Mucosa of descending colon (tissue), 3 donors: ENCODE measurements at regions of chr1 and their contacts with region 1.

Region 1: DNA sequence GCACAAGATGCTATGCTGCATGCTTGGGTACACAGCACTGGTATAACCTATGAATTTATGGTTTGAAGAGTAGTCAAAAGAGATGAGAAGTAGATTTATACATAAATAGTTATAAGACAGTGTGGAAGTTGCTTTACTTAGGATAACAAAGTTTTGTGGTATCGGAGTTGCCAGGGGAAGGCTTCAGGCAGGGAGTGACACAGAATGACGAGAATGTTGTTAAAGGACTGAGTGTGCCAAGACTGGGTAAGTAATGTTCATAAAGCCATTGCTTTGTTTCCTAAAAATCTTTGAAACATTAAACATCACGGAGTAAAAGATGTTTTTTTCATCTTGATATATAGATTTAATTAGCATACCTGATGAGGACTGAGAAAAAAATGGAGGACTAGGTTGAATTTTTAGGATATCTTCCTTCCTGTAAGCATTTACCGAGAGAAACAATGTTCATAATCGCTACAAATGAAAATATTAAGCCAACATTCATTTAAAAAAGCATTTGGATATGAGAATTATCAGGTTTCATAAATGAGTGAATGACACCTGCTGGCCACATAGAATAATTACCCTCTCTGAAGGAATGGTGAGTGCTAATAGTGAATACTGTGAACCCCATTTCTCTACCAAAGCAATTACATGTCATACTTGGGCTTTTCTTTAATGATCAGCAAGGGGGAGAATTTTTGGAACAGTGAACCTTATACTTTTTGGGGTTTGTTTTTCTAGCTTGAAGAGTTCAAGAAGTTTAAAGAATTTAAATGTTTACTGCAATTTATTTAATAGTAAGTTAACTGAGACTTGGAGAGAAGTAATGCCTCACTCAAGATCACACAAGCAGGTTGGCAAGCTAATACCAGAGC is 28.4 kb downstream of the EXTL2 start:
- DNase-seq: no peak
- ATAC-seq: no peak
- H3K4me3 ChIP-seq: no peak overlapping the region
- H3K4me1 ChIP-seq: no peaks in the 10 kb centered on the region
- CTCF ChIP-seq: no peak

Region 2: DNA sequence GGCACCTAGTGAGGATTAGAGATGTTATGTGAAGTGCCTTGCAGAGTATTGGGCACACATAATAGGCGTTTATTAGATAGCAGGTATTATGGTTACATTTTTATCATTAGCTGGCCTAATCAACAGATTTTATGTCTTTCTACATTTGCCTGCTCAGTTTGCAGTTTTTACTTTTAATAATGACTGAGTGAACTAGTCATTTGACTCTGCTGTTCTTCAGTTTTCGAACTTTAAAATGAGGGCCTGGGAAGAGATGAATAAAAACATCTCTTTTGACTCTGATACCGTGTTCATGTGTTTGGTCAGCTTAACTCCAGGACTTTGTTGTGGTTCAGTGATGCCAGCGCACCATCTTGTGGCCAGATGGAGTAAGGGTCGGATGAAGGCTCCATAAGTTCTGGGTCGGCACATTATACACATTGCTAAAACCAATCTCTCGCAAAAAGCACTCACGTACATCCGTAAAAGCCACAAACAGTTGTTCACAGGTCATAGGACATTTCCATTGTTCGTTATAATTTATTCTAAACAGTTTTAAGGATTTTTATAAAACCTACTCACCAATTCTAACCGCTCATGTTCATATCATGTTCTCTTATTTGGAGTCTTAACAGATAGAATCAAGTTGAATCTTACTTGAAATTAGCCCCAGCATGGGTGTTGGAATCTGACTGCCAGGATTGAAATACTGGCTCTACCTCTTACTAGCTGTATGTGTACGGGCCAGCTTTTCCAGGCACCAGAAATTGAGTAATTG is 406.7 kb before region 1 on chr1:
- intact Hi-C with region 1: loop called in 1 of 2 experiments (anchors 5 kb)
- DNase-seq: peak; percentile 58 to 83 (median 82)
- ATAC-seq: peak; percentile 93
- H3K4me3 ChIP-seq: no peak overlapping the region
- H3K4me1 ChIP-seq: peaks cover 4% of the 10 kb centered on the region
- CTCF ChIP-seq: peak; percentile 59

Region 3: GRCh38 chr1:100606438-100606837 is 259.8 kb before region 1 on chr1:
- intact Hi-C with region 1: loop called (anchors 5 to 10 kb)
- DNase-seq: peak in 2 of 3 donors; percentile 29 to 47
- ATAC-seq: peak; percentile 53
- H3K4me3 ChIP-seq: no peak overlapping the region
- H3K4me1 ChIP-seq: no peaks in the 10 kb centered on the region
- CTCF ChIP-seq: peak; percentile 14

Region 4: DNA sequence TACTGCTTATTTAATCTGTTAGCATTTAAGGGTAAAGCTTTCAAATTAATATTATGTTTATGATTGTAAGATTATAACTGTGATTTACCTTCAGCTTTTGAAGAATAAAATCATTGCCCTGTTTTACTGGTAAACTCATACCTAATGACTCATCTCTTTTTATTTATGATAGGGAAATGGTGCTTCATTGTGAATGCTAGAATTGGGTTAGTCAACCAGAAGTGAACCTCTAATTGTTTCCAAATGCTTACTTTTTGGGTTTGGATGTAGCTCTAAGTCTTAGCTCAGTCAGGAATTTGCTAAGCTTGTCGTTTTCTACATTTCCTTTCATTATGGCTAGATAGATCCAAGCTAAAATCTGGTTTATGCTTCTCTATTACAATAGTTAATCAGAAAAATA is 89.1 kb after region 1 on chr1:
- intact Hi-C with region 1: no loop called
- DNase-seq: no peak
- ATAC-seq: no peak
- H3K4me3 ChIP-seq: no peak overlapping the region
- H3K4me1 ChIP-seq: no peaks in the 10 kb centered on the region
- CTCF ChIP-seq: no peak